Motor neuron (in vitro differentiated cells): ENCODE measurements at regions of chr10 and their contacts with region 1.

Region 1: DNA sequence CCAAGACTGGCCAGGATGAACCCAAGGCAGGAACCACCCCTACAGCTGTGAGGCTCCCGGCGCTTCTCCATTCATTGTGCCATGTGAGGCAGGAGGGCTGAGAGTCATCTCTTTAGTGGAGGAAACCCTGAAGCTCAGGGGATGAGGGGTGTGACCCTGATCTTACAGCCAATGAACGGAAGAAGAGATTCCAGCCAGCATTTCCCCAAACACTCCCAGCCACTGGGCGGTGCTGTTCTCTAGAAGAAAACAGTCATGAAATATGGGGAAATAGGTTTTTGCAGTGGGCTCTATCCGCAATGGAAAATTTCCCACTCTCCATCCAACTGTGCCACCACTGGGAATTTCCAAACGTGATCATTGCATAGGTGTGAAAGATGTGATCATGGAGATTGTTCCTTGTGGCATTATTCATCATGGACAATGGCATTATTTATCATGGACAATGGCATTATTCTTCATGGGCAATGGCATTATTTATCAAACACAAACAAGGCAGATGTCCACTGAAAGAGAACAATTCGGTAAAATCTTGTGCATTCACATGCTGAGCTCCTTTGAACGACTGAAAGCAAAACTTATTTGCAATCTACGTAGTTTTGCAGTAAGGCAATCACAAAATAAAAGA is 14.0 kb upstream of the SLC18A2 start:
- ATAC-seq: peak in 3 of 8 experiments; percentile 72 to 87 (median 84)
- H3K4me3 ChIP-seq: no peak overlapping the region
- H3K27ac ChIP-seq: no peak overlapping the region
- H3K4me1 ChIP-seq: peaks cover 0 to 2% of the 10 kb centered on the region in 2 donors

Region 2: GRCh38 chr10:117047947-117048346 is 179.0 kb before region 1 on chr10:
- in situ Hi-C with region 1: no loop called
- ATAC-seq: no peak
- H3K4me3 ChIP-seq: no peak overlapping the region
- H3K27ac ChIP-seq: no peak overlapping the region
- H3K4me1 ChIP-seq: no peaks in the 10 kb centered on the region

Region 3: GRCh38 chr10:117300671-117301070 is 73.7 kb after region 1 on chr10:
- in situ Hi-C with region 1: loop called in 4 of 9 experiments (anchors 10 to 25 kb)
- ATAC-seq: no peak
- H3K4me3 ChIP-seq: no peak overlapping the region
- H3K27ac ChIP-seq: no peak overlapping the region
- H3K4me1 ChIP-seq: no peaks in the 10 kb centered on the region

Region 4: DNA sequence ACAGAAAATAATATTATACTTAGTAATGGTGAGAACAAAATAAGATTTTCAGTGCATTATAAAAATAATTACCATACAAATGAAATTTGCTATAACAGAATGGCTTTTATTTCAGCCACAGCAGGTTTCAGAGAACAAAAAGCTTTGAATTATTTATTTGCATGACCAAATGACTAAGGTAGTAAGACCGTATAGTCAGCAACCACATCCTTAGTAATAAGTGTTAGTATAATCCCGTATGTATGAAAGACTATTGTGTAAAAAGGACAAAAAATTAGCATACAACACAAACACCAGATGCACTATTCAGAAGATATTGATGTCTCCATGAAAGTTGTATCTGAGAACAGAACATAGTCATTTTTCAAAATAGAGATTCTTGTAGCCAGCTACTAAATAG is 136.1 kb after region 1 on chr10:
- in situ Hi-C with region 1: no loop called
- ATAC-seq: peak in 2 of 8 experiments; percentile 33 to 60
- H3K4me3 ChIP-seq: no peak overlapping the region
- H3K27ac ChIP-seq: no peak overlapping the region
- H3K4me1 ChIP-seq: peaks cover 3 to 12% of the 10 kb centered on the region in 2 donors

Region 5: DNA sequence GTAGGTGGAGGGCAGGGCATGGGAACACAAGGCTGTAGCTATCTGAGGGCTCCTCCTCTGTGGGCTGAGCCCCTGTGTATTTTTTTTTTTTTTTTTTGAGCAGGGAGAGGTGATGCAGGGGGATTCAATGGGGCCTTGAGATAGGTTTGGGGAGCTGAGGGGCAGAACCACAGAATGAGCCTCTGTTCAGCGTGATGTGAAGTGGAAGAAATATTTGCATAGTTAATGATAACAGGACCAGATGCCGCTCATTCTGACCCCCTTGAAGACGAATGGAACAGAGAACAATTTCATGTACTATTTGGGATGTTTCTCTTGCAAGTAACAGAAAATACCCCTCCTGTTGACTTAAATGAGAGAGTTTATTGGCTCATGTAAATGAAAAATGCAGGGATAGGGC is 245.9 kb after region 1 on chr10:
- in situ Hi-C with region 1: no loop called
- ATAC-seq: no peak
- H3K4me3 ChIP-seq: no peak overlapping the region
- H3K27ac ChIP-seq: no peak overlapping the region
- H3K4me1 ChIP-seq: no peaks in the 10 kb centered on the region

Region 6: DNA sequence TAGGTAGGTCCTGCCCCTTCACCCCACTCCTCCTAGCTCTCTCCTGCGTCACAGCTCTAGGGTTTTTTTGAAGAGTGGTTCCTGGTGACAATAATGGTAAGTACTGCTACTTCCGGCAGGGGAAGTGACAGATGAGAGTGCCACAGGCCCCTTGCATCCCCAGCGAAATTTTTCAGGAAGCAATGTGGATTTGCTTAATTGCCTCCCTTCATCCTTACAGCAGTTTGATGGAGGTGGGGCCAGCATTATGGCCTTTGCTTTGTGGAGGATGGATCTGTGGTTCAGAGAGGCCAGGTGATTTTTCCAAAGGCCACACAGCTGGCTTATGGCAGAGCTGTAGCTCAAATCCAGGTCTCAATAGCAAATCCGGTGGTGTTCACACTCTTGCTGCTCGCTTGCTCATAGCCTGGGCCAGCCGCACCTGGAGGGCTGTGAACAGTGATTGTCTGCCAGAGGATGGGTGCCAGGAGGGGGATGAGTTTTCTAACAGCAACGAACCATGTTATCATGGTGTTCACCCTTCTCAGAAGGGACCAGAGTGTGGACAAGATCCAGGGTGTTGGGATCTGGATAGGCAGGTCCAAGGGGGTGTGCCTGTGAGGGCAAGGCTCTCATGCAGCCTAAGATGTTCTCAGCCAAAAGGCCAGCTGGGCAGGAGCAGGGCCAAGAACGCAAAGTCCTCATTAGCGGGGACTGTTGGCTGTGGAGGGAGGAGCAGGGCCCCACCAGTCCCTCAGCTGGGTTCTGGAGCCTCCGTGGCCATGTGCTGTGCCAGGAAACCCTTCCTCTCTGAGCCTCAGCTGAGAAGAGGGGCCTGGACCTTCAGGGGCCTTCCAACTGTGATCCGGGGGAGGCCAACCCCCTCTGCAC is 404.6 kb after region 1 on chr10:
- in situ Hi-C with region 1: no loop called
- ATAC-seq: peak in 1 of 8 experiments; percentile 55
- H3K4me3 ChIP-seq: no peak overlapping the region
- H3K27ac ChIP-seq: no peak overlapping the region
- H3K4me1 ChIP-seq: no peaks in the 10 kb centered on the region